ENCODE measurements at regions of chr3 and their contacts with region 1.

Region 1: GRCh38 chr3:140198242-140198641 is 263.3 kb downstream of the CLSTN2 start:
- DNase-seq: no peak

Region 2: GRCh38 chr3:139758654-139759291 is 439.5 kb before region 1 on chr3:
- intact Hi-C with region 1: loop called in 1 of 2 experiments (anchors 10 kb)
- DNase-seq: no peak

Region 3: GRCh38 chr3:140898340-140899180 is 700.3 kb after region 1 on chr3:
- intact Hi-C with region 1: no loop called
- DNase-seq: no peak

Measured in posterior vena cava (tissue), 2 donors.